ENCODE measurements at regions of chr19 and their contacts with region 1.

Region 1: GRCh38 chr19:46661020-46661731 is at the start of gene DACT3:
- DNase-seq: peak; percentile 99
- CTCF ChIP-seq: no peak

Region 2: GRCh38 chr19:46451352-46451751 is 209.8 kb before region 1 on chr19:
- CTCF ChIA-PET with region 1: no interaction called
- POLR2A ChIA-PET with region 1: no interaction called
- DNase-seq: no peak
- CTCF ChIP-seq: no peak

Region 3: DNA sequence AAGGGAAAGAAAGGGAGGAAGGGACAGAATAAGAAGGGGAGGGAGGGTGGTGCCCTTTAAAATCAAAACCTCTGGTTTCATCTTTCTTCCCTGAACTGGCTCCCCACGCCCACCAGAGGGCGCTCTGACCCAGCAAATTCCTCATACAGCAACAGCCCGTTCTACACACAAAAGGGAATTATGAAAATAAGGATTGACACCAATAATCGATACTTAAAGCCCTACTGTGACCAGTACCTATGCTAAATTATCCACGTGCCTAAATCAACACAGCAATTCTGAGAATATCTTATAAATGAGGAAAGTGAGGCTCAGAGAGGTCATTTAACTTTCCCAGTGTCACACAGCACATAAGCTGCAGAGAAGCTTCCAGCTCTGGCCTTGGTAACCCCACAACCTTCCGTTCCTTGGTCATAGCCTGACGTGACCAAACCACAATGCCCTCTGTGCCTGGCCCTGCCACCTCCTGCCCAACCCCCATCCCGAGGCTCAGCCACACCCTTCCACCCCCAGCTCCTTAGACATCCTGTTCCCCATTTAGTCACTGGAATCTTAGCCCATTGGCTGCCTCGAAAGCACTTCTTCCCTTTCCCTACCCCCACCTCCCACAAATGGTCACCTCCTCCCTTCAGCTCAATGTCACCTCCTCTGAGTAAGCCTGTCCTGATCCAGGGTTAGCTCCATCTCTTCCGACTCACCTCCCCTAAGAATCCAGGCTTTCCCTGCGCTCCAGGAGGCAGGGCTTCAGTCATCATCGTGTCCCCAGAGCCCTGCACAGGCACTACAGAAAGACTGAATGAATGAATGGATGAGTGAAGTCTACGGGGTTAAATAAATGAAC is 131.3 kb before region 1 on chr19:
- CTCF ChIA-PET with region 1: interaction called, 22 read pairs
- POLR2A ChIA-PET with region 1: no interaction called
- DNase-seq: peak; percentile 82
- CTCF ChIP-seq: peak; percentile 87

Region 4: DNA sequence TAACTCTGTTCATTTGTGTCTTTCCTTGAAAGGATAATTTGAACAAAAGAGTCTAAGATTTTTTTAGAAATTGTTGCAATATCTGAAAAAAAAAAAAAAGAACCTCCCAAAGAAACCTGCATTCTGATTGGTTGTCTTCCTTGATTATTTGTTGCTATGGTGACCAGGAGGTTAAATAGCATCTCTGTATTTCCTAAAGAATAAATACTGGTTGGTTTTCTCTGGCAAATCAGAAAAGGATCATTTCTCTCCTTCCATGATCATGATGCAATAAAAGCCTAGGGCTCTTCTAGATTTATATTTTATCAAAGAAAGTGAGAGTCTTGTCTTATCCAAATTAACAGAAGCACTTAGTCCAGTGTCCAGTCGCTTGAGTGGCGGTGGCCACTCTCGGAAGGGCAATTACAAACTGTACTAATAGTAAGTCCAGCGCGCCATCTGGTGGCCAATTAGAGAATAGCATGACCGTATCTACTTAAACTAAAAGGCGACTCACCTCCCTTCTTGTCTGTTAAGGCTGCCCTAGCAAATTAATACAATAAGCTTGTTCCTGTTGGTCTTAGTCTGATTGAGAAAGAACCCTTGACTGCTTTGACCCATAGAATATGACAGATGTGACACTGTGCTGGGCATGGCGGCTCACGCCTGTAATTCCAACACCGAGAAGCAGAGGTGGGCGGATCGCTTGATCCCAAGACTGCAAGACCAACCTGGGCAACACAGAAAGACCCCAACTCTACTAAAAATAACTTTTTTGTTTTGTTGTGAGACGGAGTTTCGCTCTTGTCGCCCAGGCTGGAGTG is 118.5 kb before region 1 on chr19:
- CTCF ChIA-PET with region 1: interaction called, 13 read pairs
- POLR2A ChIA-PET with region 1: no interaction called
- DNase-seq: peak; percentile 76
- CTCF ChIP-seq: peak; percentile 78

Region 5: DNA sequence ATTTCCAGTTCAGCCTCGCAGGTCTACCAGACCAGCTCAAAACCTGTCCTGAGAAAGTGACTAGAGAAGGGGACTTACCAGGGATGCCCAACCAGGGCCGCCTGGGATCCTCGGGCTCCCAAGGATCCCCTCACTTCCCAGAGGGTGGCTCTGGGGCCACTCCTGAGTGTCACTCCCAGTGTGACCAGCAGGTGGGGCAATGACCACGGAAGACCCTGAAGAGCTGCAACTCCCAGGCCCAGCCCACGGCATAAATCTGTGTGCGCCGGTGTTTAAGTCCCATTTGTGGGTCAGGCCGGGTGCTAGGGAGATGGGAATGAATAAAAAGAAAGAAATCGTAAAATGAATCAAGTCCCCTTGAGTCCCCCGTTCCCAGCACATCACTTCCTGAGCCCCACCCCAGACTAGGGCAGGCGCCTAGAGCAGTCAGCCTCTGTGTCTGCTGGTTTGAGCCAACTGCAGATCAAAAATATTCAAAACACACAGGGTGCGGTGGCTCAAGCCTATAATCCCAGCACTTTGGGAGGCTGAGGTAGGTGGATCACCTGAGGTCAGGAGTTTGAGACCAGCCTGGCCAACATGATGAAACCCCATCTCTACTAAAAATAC is 47.0 kb before region 1 on chr19:
- CTCF ChIA-PET with region 1: interaction called, 287 read pairs
- POLR2A ChIA-PET with region 1: interaction called, 3 read pairs
- DNase-seq: peak; percentile 82
- CTCF ChIP-seq: peak; percentile 82

Region 6: DNA sequence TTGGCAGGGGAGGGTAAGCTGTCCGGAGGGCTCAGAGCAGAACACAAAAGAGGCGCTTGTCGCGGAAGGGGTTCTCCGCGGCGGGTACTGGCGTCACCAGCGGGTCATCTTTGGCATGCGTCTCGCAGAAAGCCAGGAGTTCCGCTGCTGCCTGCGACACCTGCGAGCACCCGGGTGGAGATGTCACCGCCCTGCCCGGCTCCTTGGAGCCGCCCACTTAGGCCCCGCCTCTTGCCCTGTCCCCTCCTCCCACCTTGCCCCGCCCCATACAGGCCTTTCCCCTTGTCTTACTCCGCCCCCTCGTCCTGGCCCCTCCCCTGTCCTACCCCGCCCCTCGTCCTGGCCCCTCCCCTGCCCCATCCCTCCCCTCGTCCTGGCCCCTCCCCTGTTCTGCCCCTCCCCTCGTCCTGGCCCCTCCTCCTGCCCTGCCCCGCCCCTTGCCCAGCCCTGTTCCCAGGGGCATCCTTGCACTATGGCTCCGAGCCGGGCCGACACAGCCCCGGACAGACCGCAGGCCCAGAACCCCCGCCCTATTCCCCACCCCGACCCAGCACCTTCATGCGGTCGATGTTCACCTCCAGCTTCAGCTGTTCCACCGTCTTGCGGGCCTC is 27.0 kb before region 1 on chr19:
- CTCF ChIA-PET with region 1: interaction called, 19 read pairs
- POLR2A ChIA-PET with region 1: interaction called, 3 read pairs
- DNase-seq: peak; percentile 95
- CTCF ChIP-seq: no peak

Region 7: DNA sequence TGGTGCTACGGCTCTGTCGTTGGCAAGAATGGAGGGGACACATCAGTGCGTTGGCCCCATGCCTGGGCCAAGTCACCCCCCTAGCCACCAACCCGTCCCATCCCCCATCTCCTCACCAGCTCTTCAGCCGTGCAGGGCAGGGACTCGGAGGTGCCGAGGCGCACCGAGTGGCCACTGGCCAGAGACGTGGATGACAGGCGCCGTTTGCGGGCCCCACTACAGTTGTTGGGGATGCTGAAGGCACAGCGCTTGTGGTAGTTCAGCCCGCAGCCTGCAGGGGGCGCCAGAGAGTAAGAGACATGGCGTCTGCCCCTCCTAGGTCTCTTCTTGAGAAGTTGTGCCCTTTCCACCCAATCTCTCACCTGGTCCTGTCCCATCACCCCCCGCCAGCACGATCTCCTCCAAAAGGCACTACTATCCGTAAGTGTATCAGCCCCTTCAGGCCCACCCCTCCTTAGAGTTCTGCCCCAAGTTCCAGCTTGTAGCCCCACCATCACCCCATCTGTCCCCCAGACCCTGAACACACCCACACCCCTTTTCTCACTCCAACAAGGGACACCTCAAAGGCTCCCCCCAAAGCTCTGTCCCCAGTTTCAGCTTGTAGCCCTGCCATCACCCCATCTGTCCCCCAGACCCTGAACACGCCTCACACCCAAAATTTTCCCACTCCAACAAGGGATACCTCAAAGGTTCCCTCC is 43.4 kb after region 1 on chr19:
- CTCF ChIA-PET with region 1: interaction called, 36 read pairs
- POLR2A ChIA-PET with region 1: no interaction called
- DNase-seq: peak; percentile 92
- CTCF ChIP-seq: peak; percentile 90